Caco-2 (cell line): ENCODE measurements at regions of chr11 and their contacts with region 1.

Region 1: DNA sequence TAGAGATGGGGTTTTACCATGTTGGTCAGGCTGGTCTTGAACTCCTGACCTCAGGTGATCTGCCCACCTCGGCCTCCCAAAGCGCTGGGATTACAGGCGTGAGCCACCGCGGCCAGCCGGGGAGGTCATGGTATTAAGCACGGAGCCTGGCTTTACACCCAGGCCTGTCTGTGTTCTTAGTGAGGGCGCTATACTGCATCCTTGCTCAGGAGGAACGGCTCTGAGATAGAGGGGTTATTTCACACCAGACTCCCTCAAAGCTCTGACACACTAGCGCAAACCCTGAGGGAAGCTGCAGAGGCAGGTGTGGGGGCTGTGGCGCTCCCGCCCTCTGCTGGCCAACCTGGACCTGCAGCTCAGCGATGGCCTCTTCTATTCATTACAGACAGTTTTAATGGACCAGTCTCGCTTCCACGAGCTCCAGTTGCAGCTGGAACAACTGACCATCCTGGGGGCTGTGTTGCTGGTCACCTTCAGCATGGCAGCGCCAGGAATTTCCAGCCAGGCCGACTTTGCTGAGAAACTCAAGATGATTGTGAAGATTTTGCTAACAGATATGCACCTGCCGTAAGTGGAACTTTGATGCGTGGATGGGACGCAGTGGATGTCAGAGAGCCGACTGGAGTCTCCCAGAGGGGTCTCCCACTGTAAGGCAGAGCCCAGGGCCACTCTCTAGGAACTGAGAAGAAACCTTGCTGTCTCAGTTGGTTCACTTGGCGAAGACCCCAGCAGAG is 26.2 kb downstream of the TCP11L1 start:
- DNase-seq: peak; percentile 84 to 86
- H3K4me3 ChIP-seq: no peak overlapping the region
- H3K4me3 Mint-ChIP-seq: no peak overlapping the region
- H3K27ac Mint-ChIP-seq: no peak overlapping the region
- H3K4me1 ChIP-seq: peaks cover 22% of the 10 kb centered on the region
- H3K4me1 Mint-ChIP-seq: peaks cover 15% of the 10 kb centered on the region
- H3K27me3 ChIP-seq: no peaks in the 10 kb centered on the region
- H3K27me3 Mint-ChIP-seq: no peaks in the 10 kb centered on the region
- CTCF ChIP-seq: peak; percentile 95 to 99

Region 2: GRCh38 chr11:32809313-32809712 is 256.3 kb before region 1 on chr11:
- CTCF ChIA-PET with region 1: no interaction called
- POLR2A ChIA-PET with region 1: no interaction called
- intact Hi-C with region 1: loop called (anchors 2 kb)
- DNase-seq: peak; percentile 80 to 83
- H3K4me3 ChIP-seq: no peak overlapping the region
- H3K4me3 Mint-ChIP-seq: no peak overlapping the region
- H3K27ac Mint-ChIP-seq: no peak overlapping the region
- H3K4me1 ChIP-seq: no peaks in the 10 kb centered on the region
- H3K4me1 Mint-ChIP-seq: no peaks in the 10 kb centered on the region
- H3K27me3 ChIP-seq: no peaks in the 10 kb centered on the region
- H3K27me3 Mint-ChIP-seq: peaks cover 4% of the 10 kb centered on the region
- CTCF ChIP-seq: peak; percentile 87 to 96

Region 3: DNA sequence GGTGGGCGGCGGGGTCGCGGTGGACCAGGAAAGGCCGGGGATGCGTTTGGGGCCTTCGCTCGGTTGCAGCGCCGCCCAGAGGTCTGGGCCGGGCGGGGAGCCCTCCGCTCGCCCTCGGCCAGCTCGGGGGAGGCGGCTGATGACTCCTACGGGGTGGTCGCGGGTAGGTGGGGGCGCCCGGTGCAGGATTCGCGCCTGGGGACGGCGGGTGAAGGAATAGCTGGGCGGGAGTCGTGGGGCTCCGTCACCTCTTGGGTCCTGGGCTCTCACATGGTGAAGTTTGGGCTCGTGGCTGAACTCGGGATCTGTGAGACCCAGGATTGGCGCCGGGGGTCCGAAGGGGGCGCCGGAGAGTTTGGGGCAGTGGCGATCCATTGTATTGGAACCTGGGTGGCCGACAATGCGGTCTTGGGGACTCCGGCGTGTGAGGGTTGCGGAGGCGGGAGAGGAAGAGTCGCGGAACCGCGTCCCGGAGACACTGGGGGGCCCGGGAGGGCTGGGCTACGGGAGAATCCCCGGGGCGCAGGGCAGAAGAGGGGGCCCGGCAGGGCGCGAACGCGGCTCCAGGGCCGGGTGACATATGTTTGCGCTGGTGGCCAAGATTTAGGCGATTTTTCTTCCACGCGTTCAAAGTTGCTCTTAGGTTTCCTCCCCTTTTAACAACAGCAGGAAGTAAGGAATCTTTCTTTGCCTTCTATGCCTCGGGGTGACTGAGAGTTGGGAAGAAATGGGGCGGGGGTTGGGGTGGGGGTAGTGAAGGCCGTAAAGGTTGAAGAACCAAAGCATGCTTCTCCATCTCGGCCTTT is 172.1 kb before region 1 on chr11:
- CTCF ChIA-PET with region 1: interaction called, 7 read pairs
- POLR2A ChIA-PET with region 1: no interaction called
- intact Hi-C with region 1: loop called (anchors 5 kb)
- DNase-seq: peak; percentile 65 to 79
- H3K4me3 ChIP-seq: peak overlapping the region; percentile 96
- H3K4me3 Mint-ChIP-seq: peak overlapping the region; percentile 91
- H3K27ac Mint-ChIP-seq: peak overlapping the region; percentile 88
- H3K4me1 ChIP-seq: peaks cover 23% of the 10 kb centered on the region
- H3K4me1 Mint-ChIP-seq: peaks cover 18% of the 10 kb centered on the region
- H3K27me3 ChIP-seq: no peaks in the 10 kb centered on the region
- H3K27me3 Mint-ChIP-seq: no peaks in the 10 kb centered on the region
- CTCF ChIP-seq: peak; percentile 44 to 65

Region 4: DNA sequence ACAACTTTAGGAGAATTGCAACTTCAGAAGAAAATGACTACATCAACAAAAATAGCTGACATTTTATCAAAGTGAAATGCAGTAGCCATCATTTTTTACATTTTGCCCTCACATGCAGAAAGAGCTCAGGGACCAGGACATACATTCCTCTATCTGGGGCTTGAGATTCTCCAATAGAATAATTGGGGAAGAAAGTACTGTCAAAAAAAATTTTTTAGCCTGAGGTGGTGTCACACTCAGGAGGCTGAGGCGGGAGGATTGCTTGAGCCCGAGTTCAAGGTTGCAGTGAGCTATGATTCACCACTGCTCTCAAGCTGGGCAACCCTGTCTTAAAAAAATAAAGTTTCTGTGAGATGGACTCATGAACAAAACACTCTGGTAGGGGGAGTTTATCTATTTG is 82.1 kb before region 1 on chr11:
- CTCF ChIA-PET with region 1: interaction called, 15 read pairs
- POLR2A ChIA-PET with region 1: no interaction called
- intact Hi-C with region 1: loop called (anchors 2 kb)
- DNase-seq: no peak
- H3K4me3 ChIP-seq: no peak overlapping the region
- H3K4me3 Mint-ChIP-seq: no peak overlapping the region
- H3K27ac Mint-ChIP-seq: no peak overlapping the region
- H3K4me1 ChIP-seq: 0 out of 2 replicates have a peak, but pooled peaks cover 7% of the 10 kb centered on the region
- H3K4me1 Mint-ChIP-seq: peaks cover 12% of the 10 kb centered on the region
- H3K27me3 ChIP-seq: no peaks in the 10 kb centered on the region
- H3K27me3 Mint-ChIP-seq: no peaks in the 10 kb centered on the region
- CTCF ChIP-seq: no peak

Region 5: DNA sequence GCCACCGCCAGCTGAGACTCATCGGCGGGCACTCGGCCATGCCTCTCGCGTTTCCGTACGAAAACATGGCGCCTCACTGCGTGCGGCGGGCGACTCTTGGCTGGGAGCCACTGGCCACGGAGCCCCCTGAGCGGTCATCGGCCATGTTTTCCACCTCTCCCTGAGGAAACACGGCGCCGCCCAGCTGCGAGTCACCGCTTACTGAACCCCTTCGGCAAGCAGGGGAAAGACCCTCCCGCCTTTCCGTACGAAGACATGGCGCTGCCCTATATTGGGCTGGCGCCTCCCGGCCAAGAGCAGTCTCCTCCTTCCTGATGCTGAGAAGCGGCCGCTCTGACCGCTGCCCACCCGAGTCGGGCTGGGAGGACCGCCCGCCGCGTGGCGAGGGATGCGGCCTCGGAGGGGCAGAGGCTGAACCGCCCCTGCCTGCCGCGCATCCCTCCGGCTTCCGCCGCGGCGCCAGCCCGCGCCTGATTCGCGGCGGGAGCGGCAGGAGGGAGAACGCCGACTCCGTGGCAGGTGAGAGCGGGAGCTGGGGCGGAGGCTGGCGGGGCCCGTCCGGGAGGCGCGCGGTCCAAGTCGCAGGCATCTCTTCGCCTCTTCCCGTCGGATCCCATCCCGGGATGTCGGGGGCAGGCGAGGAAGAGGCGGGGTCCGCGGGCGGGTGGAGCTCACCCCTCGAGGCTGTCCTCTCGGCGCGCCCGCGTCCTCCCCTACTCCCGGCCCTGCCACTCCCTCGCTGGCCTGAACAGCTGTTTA is 26.2 kb before region 1 on chr11 and contains the start of gene TCP11L1:
- CTCF ChIA-PET with region 1: interaction called, 13 read pairs
- POLR2A ChIA-PET with region 1: interaction called, 7 read pairs
- intact Hi-C with region 1: loop called (anchors 1 kb)
- DNase-seq: peak; percentile 93 to 94
- H3K4me3 ChIP-seq: peak within 1 kb of the TSS; percentile 80
- H3K4me3 Mint-ChIP-seq: peak within 1 kb of the TSS; percentile 80
- H3K27ac Mint-ChIP-seq: peak within 1 kb of the TSS; percentile 96
- H3K4me1 ChIP-seq: peaks cover 24% of the 10 kb centered on the region
- H3K4me1 Mint-ChIP-seq: peaks cover 19% of the 10 kb centered on the region
- H3K27me3 ChIP-seq: no peaks in the 10 kb centered on the region
- H3K27me3 Mint-ChIP-seq: no peaks in the 10 kb centered on the region
- CTCF ChIP-seq: no peak
- total RNA-seq, gene TCP11L1: 22.8 and 25.0 TPM in 2 replicates